GM12878 (cell line): ENCODE measurements at regions of chr14 and their contacts with region 1.

Region 1: DNA sequence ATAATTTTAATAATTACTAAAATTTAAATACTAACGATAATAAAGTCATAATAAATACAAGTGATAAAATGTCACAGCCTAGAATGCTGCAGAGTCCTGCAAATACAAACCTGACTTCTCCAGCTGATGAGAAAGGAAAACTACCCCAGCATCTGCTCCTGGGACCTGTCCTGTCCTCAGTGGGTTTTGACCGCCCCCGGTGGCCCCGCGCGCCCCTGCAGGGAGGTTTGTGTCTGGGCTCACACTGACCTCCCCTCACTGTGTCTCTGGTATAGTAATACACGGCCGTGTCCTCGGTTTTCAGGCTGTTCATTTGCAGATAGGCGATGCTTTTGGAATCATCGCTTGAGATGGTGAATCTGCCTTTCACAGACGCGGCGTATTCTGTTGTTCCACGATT is 1139.4 kb downstream of the TMEM121 start:
- DNase-seq: no peak
- ATAC-seq: no peak
- H3K4me3 ChIP-seq: no peak overlapping the region
- H3K27ac ChIP-seq: no peak overlapping the region
- H3K4me1 ChIP-seq: no peaks in the 10 kb centered on the region
- H3K27me3 ChIP-seq: peaks cover 0 to 3% of the 10 kb centered on the region in 2 experiments; a peak in 1 of 4 replicates
- CTCF ChIP-seq: no peak
- EP300 ChIP-seq: no peak
- POLR2A ChIP-seq: no peak
- RAD21 ChIP-seq: no peak

Region 2: DNA sequence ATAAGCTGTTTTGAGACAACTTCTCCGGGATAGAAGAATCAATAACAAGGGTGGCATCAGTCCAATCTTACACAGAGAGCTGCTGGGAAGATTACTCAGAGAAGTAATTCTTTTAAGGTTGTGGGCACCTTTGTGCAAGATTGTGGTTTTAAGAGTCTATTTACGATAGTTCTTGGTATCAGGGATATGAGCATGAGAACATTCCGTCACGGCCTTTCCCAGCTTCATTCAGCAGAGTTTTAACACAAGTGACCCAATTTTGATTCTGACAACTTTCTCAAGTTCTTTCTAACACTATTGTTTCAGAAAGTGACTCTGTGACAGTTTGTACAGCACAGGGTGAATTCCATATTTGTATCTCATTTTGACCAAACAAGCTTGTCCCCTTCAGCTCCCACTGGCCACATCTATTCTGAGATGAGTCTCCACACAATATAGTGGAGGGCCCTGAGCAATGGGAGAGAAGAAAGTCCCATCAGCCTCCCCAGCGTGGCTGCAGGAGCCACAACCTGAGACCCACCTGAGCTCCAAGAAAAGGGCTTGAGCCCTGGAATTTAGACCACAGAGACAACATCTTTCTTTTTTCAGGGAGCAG is 270.3 kb before region 1 on chr14:
- CTCF ChIA-PET with region 1: no interaction called
- POLR2A ChIA-PET with region 1: no interaction called
- RAD21 ChIA-PET with region 1: no interaction called
- SMC1A ChIA-PET with region 1: no interaction called
- in situ Hi-C with region 1: no loop called
- intact Hi-C with region 1: no loop called
- DNase-seq: no peak
- ATAC-seq: peak; percentile 45
- H3K4me3 ChIP-seq: no peak overlapping the region
- H3K27ac ChIP-seq: no peak overlapping the region
- H3K4me1 ChIP-seq: no peaks in the 10 kb centered on the region
- H3K27me3 ChIP-seq: peaks cover 0 to 3% of the 10 kb centered on the region in 2 experiments; a peak in 2 of 4 replicates
- CTCF ChIP-seq: no peak
- EP300 ChIP-seq: no peak
- POLR2A ChIP-seq: no peak
- RAD21 ChIP-seq: no peak

Region 3: GRCh38 chr14:106530423-106531107 is 135.2 kb before region 1 on chr14:
- CTCF ChIA-PET with region 1: interaction called, 31 read pairs
- POLR2A ChIA-PET with region 1: no interaction called
- RAD21 ChIA-PET with region 1: no interaction called
- SMC1A ChIA-PET with region 1: no interaction called
- in situ Hi-C with region 1: no loop called
- intact Hi-C with region 1: no loop called
- DNase-seq: peak; percentile 51
- ATAC-seq: peak; percentile 97
- H3K4me3 ChIP-seq: no peak overlapping the region
- H3K27ac ChIP-seq: no peak overlapping the region
- H3K4me1 ChIP-seq: peaks cover 8% of the 10 kb centered on the region
- H3K27me3 ChIP-seq: no peaks in the 10 kb centered on the region
- CTCF ChIP-seq: peak; percentile 79 to 91 (median 88)
- EP300 ChIP-seq: no peak
- POLR2A ChIP-seq: no peak
- RAD21 ChIP-seq: peak; percentile 51; the same call in 1 of the 2 replicates

Region 4: DNA sequence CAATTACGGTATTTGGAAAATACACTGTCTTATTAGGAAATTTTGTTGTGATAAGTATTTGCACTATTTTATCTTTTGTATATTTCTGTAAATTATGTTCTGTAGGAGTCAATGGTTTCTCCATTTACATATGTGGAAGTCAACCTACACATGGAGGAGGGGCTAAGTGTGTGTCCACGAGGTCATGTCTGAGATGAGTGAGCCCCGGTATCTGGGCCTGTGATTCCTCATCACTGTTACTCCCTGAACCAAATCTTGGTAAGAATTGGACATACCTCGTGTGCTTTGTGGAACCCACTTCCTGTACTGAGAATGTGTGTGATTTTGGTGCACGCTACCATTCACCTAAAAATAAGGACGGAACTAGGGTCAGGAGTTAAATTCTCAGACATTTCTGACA is 33.9 kb before region 1 on chr14:
- CTCF ChIA-PET with region 1: interaction called, 33 read pairs
- POLR2A ChIA-PET with region 1: no interaction called
- RAD21 ChIA-PET with region 1: no interaction called
- SMC1A ChIA-PET with region 1: no interaction called
- in situ Hi-C with region 1: no loop called
- intact Hi-C with region 1: no loop called
- DNase-seq: no peak
- ATAC-seq: no peak
- H3K4me3 ChIP-seq: no peak overlapping the region
- H3K27ac ChIP-seq: no peak overlapping the region
- H3K4me1 ChIP-seq: no peaks in the 10 kb centered on the region
- H3K27me3 ChIP-seq: no peaks in the 10 kb centered on the region; a peak in 2 of 4 replicates
- CTCF ChIP-seq: no peak
- EP300 ChIP-seq: no peak
- POLR2A ChIP-seq: no peak
- RAD21 ChIP-seq: no peak

Region 5: DNA sequence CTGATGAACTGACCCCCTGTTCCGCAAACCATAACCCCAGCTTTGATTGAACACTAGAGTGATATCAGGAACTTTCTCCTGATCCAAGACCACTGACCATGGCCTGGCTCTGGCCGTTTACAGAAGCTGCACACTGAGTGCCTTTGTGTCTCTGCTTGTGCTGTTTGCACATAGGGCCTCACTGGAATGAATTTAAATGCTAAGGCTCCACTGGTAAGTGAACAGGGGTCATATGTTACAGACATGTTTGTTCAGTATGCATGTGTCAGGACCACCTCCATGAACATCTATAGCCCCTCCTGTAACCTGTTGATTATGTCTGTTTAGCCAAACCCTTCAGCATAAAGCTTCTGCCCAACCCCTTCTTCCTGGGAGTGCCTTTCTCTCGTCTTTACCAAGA is 100.3 kb after region 1 on chr14:
- CTCF ChIA-PET with region 1: interaction called, 23 read pairs
- POLR2A ChIA-PET with region 1: no interaction called
- RAD21 ChIA-PET with region 1: interaction called, 4 read pairs
- SMC1A ChIA-PET with region 1: interaction called, 3 read pairs
- in situ Hi-C with region 1: no loop called
- intact Hi-C with region 1: no loop called
- DNase-seq: no peak
- ATAC-seq: no peak
- H3K4me3 ChIP-seq: no peak overlapping the region
- H3K27ac ChIP-seq: no peak overlapping the region
- H3K4me1 ChIP-seq: peaks cover 14% of the 10 kb centered on the region
- H3K27me3 ChIP-seq: no peaks in the 10 kb centered on the region
- CTCF ChIP-seq: no peak
- EP300 ChIP-seq: no peak
- POLR2A ChIP-seq: no peak
- RAD21 ChIP-seq: no peak

Region 6: GRCh38 chr14:106823552-106823951 is 157.7 kb after region 1 on chr14:
- CTCF ChIA-PET with region 1: interaction called, 14 read pairs
- POLR2A ChIA-PET with region 1: no interaction called
- RAD21 ChIA-PET with region 1: no interaction called
- SMC1A ChIA-PET with region 1: interaction called, 3 read pairs
- in situ Hi-C with region 1: no loop called
- intact Hi-C with region 1: no loop called
- DNase-seq: no peak
- ATAC-seq: no peak
- H3K4me3 ChIP-seq: no peak overlapping the region
- H3K27ac ChIP-seq: no peak overlapping the region
- H3K4me1 ChIP-seq: peaks cover 20% of the 10 kb centered on the region
- H3K27me3 ChIP-seq: no peaks in the 10 kb centered on the region; a peak in 1 of 4 replicates
- CTCF ChIP-seq: no peak
- EP300 ChIP-seq: no peak
- POLR2A ChIP-seq: no peak
- RAD21 ChIP-seq: no peak

Region 7: DNA sequence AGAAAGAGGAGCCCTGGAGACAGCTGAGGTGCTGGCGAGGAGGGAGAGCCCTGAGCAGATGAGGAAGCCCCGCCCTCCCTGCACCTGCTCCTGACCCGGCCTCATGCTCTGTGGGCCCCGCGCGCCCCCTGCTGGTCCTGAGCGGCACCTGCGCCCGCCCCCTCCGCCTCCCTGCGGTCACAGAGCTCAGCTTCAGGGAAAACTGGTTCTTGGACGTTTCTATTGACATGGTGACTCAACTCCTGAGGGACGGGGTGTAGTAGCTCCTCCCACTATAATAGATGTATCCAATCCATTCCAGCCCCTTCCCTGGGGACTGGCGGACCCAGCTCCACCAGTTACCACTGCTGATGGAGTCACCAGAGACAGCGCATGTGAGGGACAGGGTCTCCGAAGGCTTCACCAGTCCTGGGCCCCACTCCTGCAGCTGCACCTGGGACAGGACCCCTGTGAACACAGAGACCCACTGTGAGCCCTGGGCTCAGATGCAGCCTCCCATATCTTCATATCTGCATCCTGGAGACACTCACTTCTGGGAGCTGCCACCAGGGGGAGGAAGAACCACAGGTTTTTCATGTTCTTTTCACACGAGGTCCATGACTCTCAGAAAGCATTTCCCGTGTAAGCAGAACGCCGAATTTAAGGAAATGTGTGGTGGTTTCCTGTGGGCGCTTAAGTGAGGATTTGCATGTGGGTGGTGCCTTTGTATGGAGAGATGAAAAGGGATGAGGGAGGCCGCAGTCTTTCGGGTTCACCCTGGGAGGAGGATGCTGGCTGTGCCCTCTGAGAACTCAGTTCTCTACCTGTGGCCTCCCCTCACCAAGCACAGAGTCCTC is 207.0 kb after region 1 on chr14:
- CTCF ChIA-PET with region 1: interaction called, 11 read pairs
- POLR2A ChIA-PET with region 1: no interaction called
- RAD21 ChIA-PET with region 1: interaction called, 4 read pairs
- SMC1A ChIA-PET with region 1: interaction called, 4 read pairs
- in situ Hi-C with region 1: no loop called
- intact Hi-C with region 1: no loop called
- DNase-seq: no peak
- ATAC-seq: peak; percentile 86
- H3K4me3 ChIP-seq: peak overlapping the region; percentile 50; the same call in 1 of the 2 replicates
- H3K27ac ChIP-seq: no peak overlapping the region
- H3K4me1 ChIP-seq: peaks cover 25% of the 10 kb centered on the region
- H3K27me3 ChIP-seq: peaks cover 0 to 2% of the 10 kb centered on the region in 2 experiments; a peak in 2 of 4 replicates
- CTCF ChIP-seq: peak; percentile 62 to 93 (median 75)
- EP300 ChIP-seq: no peak
- POLR2A ChIP-seq: no peak
- RAD21 ChIP-seq: peak; percentile 73